Mammary epithelial cell (primary cell): ENCODE measurements at regions of chr14 and their contacts with region 1.

Region 1: GRCh38 chr14:94904636-94905035 is 134.7 kb upstream of the GSC start:
- DNase-seq: no peak
- H3K4me3 ChIP-seq: no peak overlapping the region
- H3K27ac ChIP-seq: no peak overlapping the region
- H3K4me1 ChIP-seq: no peaks in the 10 kb centered on the region
- H3K27me3 ChIP-seq: no peaks in the 10 kb centered on the region
- CTCF ChIP-seq: no peak

Region 2: DNA sequence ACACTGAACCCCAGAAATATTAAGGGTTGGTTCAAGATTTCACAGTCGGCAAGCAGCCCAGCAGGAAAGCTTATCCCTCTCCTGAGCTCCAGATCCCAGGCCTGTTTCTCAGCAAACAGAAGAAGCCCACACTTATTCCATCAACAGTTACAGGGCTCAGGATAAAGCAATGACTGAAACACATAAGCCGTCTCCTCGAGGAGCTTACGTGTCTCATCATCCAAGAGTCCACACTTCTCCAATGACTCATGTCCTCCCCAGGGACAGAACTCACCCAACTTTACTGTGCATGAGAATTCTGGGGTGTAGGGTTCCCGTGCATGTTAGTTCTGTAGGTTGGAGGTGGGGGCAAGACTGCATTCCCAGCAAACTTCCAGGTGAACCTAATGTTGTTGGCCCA is 165.9 kb before region 1 on chr14:
- CTCF ChIA-PET with region 1: no interaction called
- dilution Hi-C with region 1: no loop called
- in situ Hi-C with region 1: no loop called
- intact Hi-C with region 1: no loop called
- DNase-seq: no peak
- H3K4me3 ChIP-seq: no peak overlapping the region
- H3K27ac ChIP-seq: no peak overlapping the region
- H3K4me1 ChIP-seq: no peaks in the 10 kb centered on the region
- H3K27me3 ChIP-seq: no peaks in the 10 kb centered on the region
- CTCF ChIP-seq: no peak

Region 3: DNA sequence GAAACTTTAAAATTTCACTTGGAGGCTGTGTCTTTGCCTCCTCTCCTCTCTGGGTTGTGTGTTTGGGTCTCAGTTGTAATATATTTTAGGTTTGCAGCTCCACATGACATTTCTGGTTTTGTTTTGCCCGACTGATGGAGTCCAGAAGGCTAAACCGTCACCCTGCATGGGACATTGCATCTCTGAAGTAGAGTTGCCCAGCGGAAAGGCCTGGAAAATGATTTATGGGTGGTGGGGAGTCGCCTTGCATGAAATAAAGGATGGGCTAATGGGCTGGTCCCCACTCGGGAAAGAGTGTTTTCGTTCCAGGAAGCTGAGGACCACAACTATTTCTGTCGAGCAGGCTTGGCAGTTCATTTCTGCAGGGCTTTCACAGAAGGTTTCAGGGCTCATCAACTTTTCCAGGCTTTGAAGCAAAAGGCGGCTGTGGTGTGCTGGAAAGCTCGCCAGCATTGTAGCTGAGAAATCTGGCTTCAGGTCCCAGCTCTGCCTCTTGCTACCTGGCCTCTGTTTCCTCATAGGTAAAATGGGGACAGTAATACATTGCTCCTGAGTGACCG is 60.0 kb before region 1 on chr14:
- CTCF ChIA-PET with region 1: no interaction called
- dilution Hi-C with region 1: no loop called
- in situ Hi-C with region 1: no loop called
- intact Hi-C with region 1: no loop called
- DNase-seq: no peak
- H3K4me3 ChIP-seq: no peak overlapping the region
- H3K27ac ChIP-seq: no peak overlapping the region
- H3K4me1 ChIP-seq: no peaks in the 10 kb centered on the region
- H3K27me3 ChIP-seq: no peaks in the 10 kb centered on the region
- CTCF ChIP-seq: no peak

Region 4: DNA sequence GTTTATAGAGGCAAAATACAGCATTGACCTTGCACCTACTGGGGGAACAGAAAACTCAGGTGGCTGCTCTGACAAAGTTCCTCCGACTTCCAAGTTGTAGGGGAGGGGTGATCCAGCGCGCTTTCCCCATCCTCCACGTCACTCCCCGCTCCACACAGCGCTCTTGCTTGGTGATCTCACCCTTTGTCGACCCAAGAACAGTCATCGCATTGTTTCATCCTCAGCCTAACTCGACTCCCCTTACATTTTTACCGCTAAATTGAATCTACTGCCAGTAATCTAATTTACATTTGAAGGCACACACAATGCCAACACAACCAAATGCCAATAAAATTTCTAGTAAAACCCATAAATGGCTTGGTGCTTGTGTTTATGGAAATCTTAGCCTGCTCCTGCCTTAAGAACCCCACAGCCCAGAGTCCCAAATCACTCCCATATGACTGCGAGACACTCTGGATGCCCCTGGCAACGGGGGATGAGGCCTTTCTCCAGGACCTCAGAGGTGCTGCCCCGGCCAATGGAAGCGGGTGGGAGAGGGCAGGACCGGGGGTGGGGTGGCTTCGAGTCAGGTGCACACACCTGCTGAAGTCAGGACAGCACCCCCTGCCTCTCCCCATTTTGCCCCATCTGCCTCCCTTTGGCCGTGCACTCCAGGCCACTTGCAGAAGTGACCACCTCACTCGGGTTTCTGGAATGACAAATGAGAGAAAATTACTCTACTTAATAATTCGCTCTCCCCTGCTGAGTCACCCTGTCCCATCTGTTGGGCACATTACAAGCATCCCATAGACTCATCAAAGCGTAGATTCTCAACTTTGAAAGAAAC is 36.5 kb before region 1 on chr14:
- CTCF ChIA-PET with region 1: no interaction called
- dilution Hi-C with region 1: loop called (anchors 5 kb)
- in situ Hi-C with region 1: no loop called
- intact Hi-C with region 1: no loop called
- DNase-seq: peak; percentile 15
- H3K4me3 ChIP-seq: no peak overlapping the region
- H3K27ac ChIP-seq: no peak overlapping the region
- H3K4me1 ChIP-seq: no peaks in the 10 kb centered on the region
- H3K27me3 ChIP-seq: no peaks in the 10 kb centered on the region
- CTCF ChIP-seq: no peak

Region 5: GRCh38 chr14:95098984-95099599 is 194.5 kb after region 1 on chr14:
- CTCF ChIA-PET with region 1: interaction called, 9 read pairs
- dilution Hi-C with region 1: no loop called
- in situ Hi-C with region 1: no loop called
- intact Hi-C with region 1: loop called (anchors 10 kb)
- DNase-seq: peak; percentile 49
- H3K4me3 ChIP-seq: no peak overlapping the region
- H3K27ac ChIP-seq: no peak overlapping the region
- H3K4me1 ChIP-seq: no peaks in the 10 kb centered on the region
- H3K27me3 ChIP-seq: no peaks in the 10 kb centered on the region
- CTCF ChIP-seq: peak; percentile 70 to 89

Region 6: DNA sequence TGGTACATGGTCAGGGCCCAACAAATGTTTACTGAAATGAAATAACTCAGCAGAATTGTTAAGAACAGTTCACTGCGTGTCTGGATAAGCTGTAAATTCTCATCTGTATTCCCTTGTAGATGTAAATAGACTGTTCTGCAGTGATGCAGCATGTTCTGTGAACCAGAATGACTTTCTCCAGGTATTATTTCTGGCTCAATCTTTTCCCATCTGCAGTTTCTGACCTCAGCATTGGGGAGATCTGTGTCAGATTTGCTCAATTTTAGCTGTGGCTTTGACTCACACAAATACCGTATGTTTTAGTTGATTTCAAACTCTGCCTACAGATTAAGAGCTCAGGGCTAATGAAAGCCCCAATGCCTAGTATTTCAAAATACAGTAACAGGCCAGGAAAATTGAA is 301.9 kb after region 1 on chr14:
- CTCF ChIA-PET with region 1: no interaction called
- dilution Hi-C with region 1: no loop called
- in situ Hi-C with region 1: no loop called
- intact Hi-C with region 1: no loop called
- DNase-seq: no peak
- H3K4me3 ChIP-seq: no peak overlapping the region
- H3K27ac ChIP-seq: no peak overlapping the region
- H3K4me1 ChIP-seq: no peaks in the 10 kb centered on the region
- H3K27me3 ChIP-seq: no peaks in the 10 kb centered on the region
- CTCF ChIP-seq: no peak